ENCODE measurements at regions of chr1 and their contacts with region 1.

Region 1: GRCh38 chr1:88983791-88984559 is 8.5 kb downstream of the KYAT3 start:
- DNase-seq: peak; percentile 36 to 49
- ATAC-seq: peak; percentile 73 to 88
- H3K4me3 ChIP-seq: 0 out of 3 replicates have a peak overlapping the region, but pooled peaks have one; percentile 19
- H3K27ac ChIP-seq: peak overlapping the region in 1 of 2 experiments; percentile 45; a peak in 1 of 6 replicates
- H3K4me1 ChIP-seq: peaks cover 19% of the 10 kb centered on the region
- CTCF ChIP-seq: peak; percentile 56
- EP300 ChIP-seq: no peak
- POLR2A ChIP-seq: no peak
- RAD21 ChIP-seq: peak; percentile 34 to 56; a peak in 3 of 5 replicates

Region 2: GRCh38 chr1:88973520-88974137 is 10.3 kb before region 1 on chr1:
- CTCF ChIA-PET with region 1: interaction called, 18 read pairs
- POLR2A ChIA-PET with region 1: no interaction called
- DNase-seq: peak; percentile 6 to 25
- ATAC-seq: peak in 1 of 2 experiments; percentile 60; a peak in 3 of 6 replicates
- H3K4me3 ChIP-seq: no peak overlapping the region
- H3K27ac ChIP-seq: no peak overlapping the region
- H3K4me1 ChIP-seq: no peaks in the 10 kb centered on the region
- CTCF ChIP-seq: peak; percentile 52
- EP300 ChIP-seq: no peak
- POLR2A ChIP-seq: no peak
- RAD21 ChIP-seq: peak; percentile 46 to 55; a peak in 4 of 5 replicates

Region 3: DNA sequence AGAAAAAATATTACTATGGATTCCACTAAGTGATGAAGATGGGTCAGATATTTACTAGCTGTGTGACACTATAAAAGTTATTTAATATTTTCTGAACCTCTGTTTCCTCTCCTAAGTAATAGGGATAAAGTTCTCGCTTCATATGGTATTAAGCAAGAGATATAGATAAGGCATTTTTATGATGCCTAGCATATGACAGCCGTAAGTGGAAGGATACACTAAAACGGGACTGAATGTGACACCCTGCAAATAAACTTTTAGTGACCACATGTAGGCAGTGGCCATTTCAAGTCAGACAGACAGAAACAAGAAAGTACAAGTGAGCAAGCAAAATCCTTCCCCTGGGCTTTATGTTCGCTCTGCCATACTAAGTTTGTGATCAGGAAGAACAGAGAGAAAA is 24.5 kb after region 1 on chr1:
- CTCF ChIA-PET with region 1: no interaction called
- POLR2A ChIA-PET with region 1: no interaction called
- DNase-seq: no peak
- ATAC-seq: no peak
- H3K4me3 ChIP-seq: no peak overlapping the region
- H3K27ac ChIP-seq: no peak overlapping the region
- H3K4me1 ChIP-seq: no peaks in the 10 kb centered on the region
- CTCF ChIP-seq: no peak
- EP300 ChIP-seq: no peak
- POLR2A ChIP-seq: no peak
- RAD21 ChIP-seq: no peak

Region 4: DNA sequence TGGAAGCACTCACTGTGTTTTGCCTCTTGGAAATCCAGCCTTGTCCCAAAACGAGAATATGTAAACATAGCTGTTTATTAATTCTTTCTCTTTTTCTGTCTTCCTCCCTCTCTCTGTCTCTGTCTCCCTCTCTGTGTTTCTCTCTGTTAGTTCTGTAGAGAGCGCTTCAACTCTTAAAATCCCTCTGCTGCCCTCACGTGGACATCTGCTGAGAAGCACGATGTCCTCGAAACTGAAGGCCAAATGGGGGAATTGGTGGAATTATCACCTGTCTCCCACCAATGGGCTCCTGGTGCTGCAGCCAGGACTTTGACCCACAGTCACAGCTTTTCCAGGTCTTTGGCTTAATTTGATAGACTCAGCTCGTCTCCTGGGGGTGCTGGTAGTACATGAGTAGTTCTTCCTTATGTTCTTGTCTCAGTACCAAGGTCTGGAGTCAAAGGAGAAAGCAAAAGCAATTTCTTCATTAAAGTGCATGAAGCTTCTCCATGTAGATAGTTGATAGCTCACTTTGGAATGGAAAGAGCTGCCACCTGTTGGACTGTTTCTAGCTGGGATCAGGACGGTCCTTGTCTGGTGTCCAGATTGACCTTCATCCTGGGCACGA is 374.4 kb after region 1 on chr1:
- CTCF ChIA-PET with region 1: interaction called, 12 read pairs
- POLR2A ChIA-PET with region 1: no interaction called
- DNase-seq: peak; percentile 19 to 57
- ATAC-seq: peak; percentile 90 to 91
- H3K4me3 ChIP-seq: no peak overlapping the region
- H3K27ac ChIP-seq: no peak overlapping the region
- H3K4me1 ChIP-seq: no peaks in the 10 kb centered on the region
- CTCF ChIP-seq: peak; percentile 58
- EP300 ChIP-seq: no peak
- POLR2A ChIP-seq: no peak
- RAD21 ChIP-seq: peak; percentile 56 to 62

Region 5: GRCh38 chr1:89454845-89455521 is 471.0 kb after region 1 on chr1:
- CTCF ChIA-PET with region 1: interaction called, 10 read pairs
- POLR2A ChIA-PET with region 1: no interaction called
- DNase-seq: peak; percentile 21 to 38
- ATAC-seq: peak; percentile 76 to 84; a peak in 5 of 6 replicates
- H3K4me3 ChIP-seq: no peak overlapping the region
- H3K27ac ChIP-seq: no peak overlapping the region
- H3K4me1 ChIP-seq: no peaks in the 10 kb centered on the region
- CTCF ChIP-seq: peak; percentile 62
- EP300 ChIP-seq: no peak
- POLR2A ChIP-seq: no peak
- RAD21 ChIP-seq: peak; percentile 70 to 72

Region 6: DNA sequence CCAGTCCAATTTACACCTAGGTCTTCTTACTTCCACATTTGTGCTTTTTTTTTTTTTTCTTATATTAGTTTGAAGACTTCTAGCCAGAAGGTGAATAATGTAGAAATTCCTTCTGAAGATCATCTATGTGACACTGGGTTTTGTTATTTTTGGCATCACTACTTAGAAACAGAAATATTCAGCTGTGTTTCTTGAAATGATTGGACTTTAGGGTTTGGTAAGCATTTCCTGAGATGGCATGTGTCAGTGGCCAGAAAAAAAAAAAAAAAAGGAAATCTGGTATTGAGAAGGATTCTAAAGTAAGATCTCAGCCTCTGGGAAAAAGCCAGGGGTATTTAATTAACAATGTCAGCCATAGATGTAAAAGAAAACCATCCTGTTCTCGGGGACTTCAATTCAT is 605.5 kb after region 1 on chr1:
- CTCF ChIA-PET with region 1: no interaction called
- POLR2A ChIA-PET with region 1: no interaction called
- DNase-seq: no peak
- ATAC-seq: no peak
- H3K4me3 ChIP-seq: no peak overlapping the region
- H3K27ac ChIP-seq: no peak overlapping the region
- H3K4me1 ChIP-seq: peaks cover 13% of the 10 kb centered on the region; the same call in 2 of the 3 replicates
- CTCF ChIP-seq: no peak
- EP300 ChIP-seq: no peak
- POLR2A ChIP-seq: no peak
- RAD21 ChIP-seq: no peak